ENCODE measurements at regions of chr7 and their contacts with region 1.

Region 1: DNA sequence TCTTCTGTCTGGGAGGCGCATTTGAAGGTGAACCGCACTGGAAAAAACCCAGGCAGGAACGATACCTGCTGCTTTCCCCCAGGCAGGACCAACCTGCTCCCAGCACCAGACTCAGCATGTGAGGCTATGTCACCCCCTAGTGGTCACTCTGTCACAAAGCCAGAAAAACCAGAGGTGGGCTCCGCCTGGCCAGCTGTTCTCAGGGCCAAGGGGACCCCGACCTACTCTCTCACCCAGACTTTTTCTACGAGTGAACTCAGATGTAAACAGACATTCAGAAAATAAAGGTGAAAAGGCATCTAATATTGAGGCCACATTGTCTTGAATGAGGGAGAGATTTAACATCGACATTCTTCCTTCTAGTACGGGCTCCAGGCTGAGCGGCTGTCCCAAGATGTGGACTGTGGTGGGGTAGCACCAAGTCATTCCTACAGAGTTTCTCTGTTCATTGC is 117.3 kb downstream of the PRKAG2 start:
- DNase-seq: no peak
- ATAC-seq: peak; percentile 80
- H3K4me3 ChIP-seq: no peak overlapping the region
- H3K27ac ChIP-seq: no peak overlapping the region
- H3K4me1 ChIP-seq: no peaks in the 10 kb centered on the region
- H3K27me3 ChIP-seq: no peaks in the 10 kb centered on the region

Region 2: GRCh38 chr7:151368136-151368571 is 391.5 kb before region 1 on chr7:
- intact Hi-C with region 1: loop called (anchors 5 kb)
- DNase-seq: peak; percentile 88 to 93
- ATAC-seq: peak; percentile 93
- H3K4me3 ChIP-seq: no peak overlapping the region
- H3K27ac ChIP-seq: no peak overlapping the region
- H3K4me1 ChIP-seq: peaks cover 0 to 7% of the 10 kb centered on the region in 2 donors
- H3K27me3 ChIP-seq: no peaks in the 10 kb centered on the region

Region 3: DNA sequence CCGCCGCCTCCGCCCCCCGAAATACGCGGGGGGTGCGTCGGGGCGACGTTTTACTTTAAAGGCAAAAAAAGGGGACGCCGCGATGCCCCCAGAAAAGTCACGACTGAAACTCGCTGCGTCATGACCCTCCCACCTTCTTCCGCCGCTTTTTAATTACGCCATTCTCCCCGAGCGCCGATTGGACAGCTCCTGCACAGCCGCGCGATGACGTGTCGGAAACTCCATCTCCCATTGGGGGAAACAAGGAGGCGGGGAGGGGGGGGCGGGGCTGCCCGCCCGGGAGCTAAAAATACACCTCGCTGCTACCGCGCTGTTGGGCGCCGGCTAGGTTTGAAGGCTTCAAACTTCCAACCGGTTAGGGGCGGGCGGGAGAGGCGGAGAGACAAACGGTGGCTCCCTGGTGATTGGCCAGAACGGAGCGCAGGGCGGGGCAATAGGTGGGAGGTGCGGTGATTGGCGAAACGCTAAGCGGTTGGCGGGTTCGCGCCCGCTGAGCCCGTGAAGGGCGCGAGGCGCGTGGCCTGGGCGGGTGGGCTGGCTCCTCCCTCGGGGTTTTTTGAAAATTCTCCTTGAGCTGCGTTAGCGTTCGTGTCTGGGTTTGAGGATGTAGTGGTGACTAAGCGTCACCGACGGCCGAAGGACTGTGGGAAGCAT is 239.7 kb before region 1 on chr7 and contains the start of gene RHEB:
- intact Hi-C with region 1: loop called in 1 of 2 experiments (anchors 5 kb)
- DNase-seq: peak; percentile 99
- ATAC-seq: peak; percentile 95
- H3K4me3 ChIP-seq: peak within 1 kb of the TSS; percentile 87 to 99
- H3K27ac ChIP-seq: peak within 1 kb of the TSS; percentile 97 to 99
- H3K4me1 ChIP-seq: peaks cover 0 to 3% of the 10 kb centered on the region in 2 donors
- H3K27me3 ChIP-seq: no peaks in the 10 kb centered on the region
- total RNA-seq, gene RHEB: 78.8 to 107 TPM

Region 4: GRCh38 chr7:151626422-151627115 is 133.0 kb before region 1 on chr7:
- intact Hi-C with region 1: loop called (anchors 5 kb)
- DNase-seq: no peak
- ATAC-seq: no peak
- H3K4me3 ChIP-seq: no peak overlapping the region
- H3K27ac ChIP-seq: no peak overlapping the region
- H3K4me1 ChIP-seq: peaks cover 1 to 11% of the 10 kb centered on the region in 2 donors
- H3K27me3 ChIP-seq: no peaks in the 10 kb centered on the region